CD8-positive, alpha-beta T cell (primary cell): ENCODE measurements at regions of chr20 and their contacts with region 1.

Region 1: DNA sequence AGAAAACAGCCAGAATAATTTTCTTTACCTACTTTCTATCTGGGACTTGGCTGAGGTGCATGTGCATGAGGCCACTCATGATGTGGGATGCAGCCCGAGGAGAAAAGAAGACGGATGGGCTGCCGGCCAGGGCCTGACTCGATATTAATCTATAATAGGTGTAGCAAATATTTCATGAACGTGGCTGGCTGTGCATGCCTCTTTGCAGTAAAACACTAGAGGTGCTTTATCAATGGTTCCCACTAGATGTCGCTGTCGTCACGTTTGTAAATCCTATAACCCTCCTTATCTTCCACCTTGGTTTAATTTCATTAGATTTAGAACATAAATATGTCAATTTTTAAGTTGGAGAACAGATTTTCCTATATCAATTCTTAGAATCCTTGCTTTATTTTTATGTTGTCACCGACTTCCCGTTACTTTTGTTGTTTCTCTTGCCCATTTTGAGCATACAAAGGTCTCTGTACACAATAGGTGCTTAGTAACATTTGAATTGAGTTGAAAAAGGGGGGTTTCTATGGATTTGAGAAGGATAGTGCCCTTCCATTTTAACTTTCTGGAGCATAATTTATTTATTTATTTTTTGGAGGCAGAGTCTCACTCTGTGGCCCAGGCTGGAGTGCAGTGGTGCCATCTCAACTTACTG is 19.6 kb upstream of the FERMT1 start:
- DNase-seq: peak in 6 of 9 experiments; percentile 8 to 64 (median 46)
- ATAC-seq: no peak
- H3K4me3 ChIP-seq: no peak overlapping the region
- H3K4me3 Mint-ChIP-seq: no peak overlapping the region
- H3K27ac ChIP-seq: no peak overlapping the region
- H3K27ac Mint-ChIP-seq: no peak overlapping the region
- H3K4me1 ChIP-seq: no peaks in the 10 kb centered on the region
- H3K4me1 Mint-ChIP-seq: no peaks in the 10 kb centered on the region
- H3K27me3 ChIP-seq: no peaks in the 10 kb centered on the region
- H3K27me3 Mint-ChIP-seq: peaks cover 7% of the 10 kb centered on the region
- CTCF ChIP-seq: peak; percentile 76

Region 2: DNA sequence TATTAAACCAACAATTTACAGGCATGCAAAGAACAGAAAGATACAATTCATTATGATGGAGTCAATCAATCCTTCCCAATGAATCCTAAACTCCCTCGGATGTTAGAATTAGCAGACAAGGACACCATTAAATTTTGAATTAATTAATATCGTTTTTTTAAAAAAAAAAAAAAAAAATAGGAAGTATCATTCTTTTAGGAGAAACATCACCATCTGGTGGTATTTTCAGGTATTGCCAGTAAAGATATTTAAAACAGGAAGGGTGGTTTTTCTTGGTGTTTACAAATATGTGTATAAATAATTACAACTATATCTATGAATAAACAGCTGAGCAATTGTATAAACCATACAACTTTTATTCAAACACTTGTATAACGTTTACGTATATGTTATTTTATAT is 1233.4 kb after region 1 on chr20:
- CTCF ChIA-PET with region 1: no interaction called
- POLR2A ChIA-PET with region 1: no interaction called
- intact Hi-C with region 1: loop called in 1 of 2 experiments (anchors 5 kb)
- DNase-seq: no peak
- ATAC-seq: no peak
- H3K4me3 ChIP-seq: no peak overlapping the region
- H3K4me3 Mint-ChIP-seq: no peak overlapping the region
- H3K27ac ChIP-seq: no peak overlapping the region
- H3K27ac Mint-ChIP-seq: no peak overlapping the region
- H3K4me1 ChIP-seq: no peaks in the 10 kb centered on the region
- H3K4me1 Mint-ChIP-seq: no peaks in the 10 kb centered on the region
- H3K27me3 ChIP-seq: no peaks in the 10 kb centered on the region
- H3K27me3 Mint-ChIP-seq: no peaks in the 10 kb centered on the region
- CTCF ChIP-seq: peak; percentile 42